ENCODE measurements at regions of chr7 and their contacts with region 1.

Region 1: GRCh38 chr7:10939911-10940703 is 33.6 kb upstream of the PHF14 start:
- DNase-seq: peak; percentile 93
- ATAC-seq: peak; percentile 94
- H3K4me3 ChIP-seq: peak overlapping the region; percentile 81 to 93 (median 90)
- H3K27ac ChIP-seq: peak overlapping the region; percentile 95
- H3K4me1 ChIP-seq: peaks cover 34% of the 10 kb centered on the region
- H3K27me3 ChIP-seq: no peaks in the 10 kb centered on the region; a peak in 2 of 5 replicates
- CTCF ChIP-seq: no peak
- EP300 ChIP-seq: no peak
- POLR2A ChIP-seq: peak; percentile 96 to 99
- RAD21 ChIP-seq: peak; percentile 65

Region 2: GRCh38 chr7:10950494-10950893 is 10.4 kb after region 1 on chr7:
- CTCF ChIA-PET with region 1: no interaction called
- POLR2A ChIA-PET with region 1: interaction called, 31 read pairs
- in situ Hi-C with region 1: no loop called
- intact Hi-C with region 1: loop called (anchors 1 kb)
- DNase-seq: peak; percentile 83
- ATAC-seq: peak; percentile 98
- H3K4me3 ChIP-seq: peak overlapping the region in 2 of 3 experiments; percentile 7 to 10; a peak in 2 of 6 replicates
- H3K27ac ChIP-seq: no peak overlapping the region
- H3K4me1 ChIP-seq: peaks cover 43% of the 10 kb centered on the region
- H3K27me3 ChIP-seq: no peaks in the 10 kb centered on the region
- CTCF ChIP-seq: no peak
- EP300 ChIP-seq: 0 out of 4 replicates have a peak, but pooled peaks of 1 of the 2 experiments have one; percentile 6
- POLR2A ChIP-seq: no peak
- RAD21 ChIP-seq: no peak

Region 3: GRCh38 chr7:10973061-10973944 is 33.2 kb after region 1 on chr7 and contains the start of gene PHF14:
- CTCF ChIA-PET with region 1: no interaction called
- POLR2A ChIA-PET with region 1: interaction called, 85 read pairs
- in situ Hi-C with region 1: no loop called
- intact Hi-C with region 1: loop called (anchors 1 kb)
- DNase-seq: peak; percentile 97
- ATAC-seq: peak; percentile 97
- H3K4me3 ChIP-seq: peak within 1 kb of the TSS; percentile 66 to 88 (median 85)
- H3K27ac ChIP-seq: peak within 1 kb of the TSS; percentile 99
- H3K4me1 ChIP-seq: peaks cover 42% of the 10 kb centered on the region
- H3K27me3 ChIP-seq: no peaks in the 10 kb centered on the region; a peak in 1 of 5 replicates
- CTCF ChIP-seq: no peak
- EP300 ChIP-seq: peak in 1 of 2 experiments; percentile 58; a peak in 2 of 4 replicates
- POLR2A ChIP-seq: peak; percentile 83 to 85
- RAD21 ChIP-seq: no peak
- total RNA-seq, gene PHF14: 68.7 and 70.9 TPM in 2 replicates

Region 4: GRCh38 chr7:10998996-10999757 is 59.1 kb after region 1 on chr7:
- CTCF ChIA-PET with region 1: no interaction called
- POLR2A ChIA-PET with region 1: interaction called, 13 read pairs
- in situ Hi-C with region 1: no loop called
- intact Hi-C with region 1: no loop called
- DNase-seq: peak; percentile 65
- ATAC-seq: peak; percentile 93
- H3K4me3 ChIP-seq: peak overlapping the region in 2 of 3 experiments; percentile 24 to 41; a peak in 2 of 6 replicates
- H3K27ac ChIP-seq: peak overlapping the region; percentile 64
- H3K4me1 ChIP-seq: peaks cover 51% of the 10 kb centered on the region
- H3K27me3 ChIP-seq: no peaks in the 10 kb centered on the region
- CTCF ChIP-seq: no peak
- EP300 ChIP-seq: no peak
- POLR2A ChIP-seq: no peak
- RAD21 ChIP-seq: no peak

Region 5: DNA sequence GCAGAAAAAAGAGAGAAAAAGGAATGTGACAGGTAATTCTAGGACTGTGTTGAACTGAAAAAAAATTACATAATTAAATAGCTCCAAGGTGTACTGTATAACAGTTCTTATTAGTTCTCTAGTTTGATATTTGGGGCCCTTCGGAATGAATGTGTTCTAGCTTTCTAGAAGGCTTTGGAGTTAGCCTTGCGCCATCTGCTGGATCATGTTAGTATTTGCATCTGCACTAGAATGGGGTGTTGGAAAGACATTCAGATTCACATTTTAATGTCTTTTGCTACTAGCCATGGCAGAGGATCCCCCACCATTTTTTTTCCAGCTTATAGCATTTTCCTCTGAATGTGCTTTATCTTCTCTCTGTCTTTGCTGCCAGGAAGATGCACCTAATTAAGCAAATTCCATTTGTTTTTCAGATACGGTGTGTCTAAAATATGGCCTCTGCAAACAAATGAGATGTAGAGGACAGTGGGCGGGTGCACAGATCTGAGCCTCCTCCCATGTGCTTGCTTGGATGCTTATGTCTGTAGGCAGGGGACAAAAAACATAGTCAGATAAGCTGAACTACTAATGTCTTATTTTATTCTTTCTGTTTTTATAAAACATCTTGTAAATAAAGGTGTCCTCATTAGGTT is 272.1 kb after region 1 on chr7:
- CTCF ChIA-PET with region 1: no interaction called
- POLR2A ChIA-PET with region 1: interaction called, 5 read pairs
- in situ Hi-C with region 1: no loop called
- intact Hi-C with region 1: loop called (anchors 5 kb)
- DNase-seq: peak; percentile 55
- ATAC-seq: peak; percentile 83
- H3K4me3 ChIP-seq: no peak overlapping the region
- H3K27ac ChIP-seq: no peak overlapping the region
- H3K4me1 ChIP-seq: peaks cover 14% of the 10 kb centered on the region
- H3K27me3 ChIP-seq: no peaks in the 10 kb centered on the region
- CTCF ChIP-seq: peak; percentile 77
- EP300 ChIP-seq: no peak
- POLR2A ChIP-seq: no peak
- RAD21 ChIP-seq: no peak

Measured in HepG2 (cell line).